Activated CD4-positive, alpha-beta T cell treated with anti-CD3 and anti-CD28 coated beads, Interleukin-2, amount 10 ng/mL, durations not matched to agents 24 days and 14 days (primary cell): ENCODE measurements at regions of chr1 and their contacts with region 1.

Region 1: DNA sequence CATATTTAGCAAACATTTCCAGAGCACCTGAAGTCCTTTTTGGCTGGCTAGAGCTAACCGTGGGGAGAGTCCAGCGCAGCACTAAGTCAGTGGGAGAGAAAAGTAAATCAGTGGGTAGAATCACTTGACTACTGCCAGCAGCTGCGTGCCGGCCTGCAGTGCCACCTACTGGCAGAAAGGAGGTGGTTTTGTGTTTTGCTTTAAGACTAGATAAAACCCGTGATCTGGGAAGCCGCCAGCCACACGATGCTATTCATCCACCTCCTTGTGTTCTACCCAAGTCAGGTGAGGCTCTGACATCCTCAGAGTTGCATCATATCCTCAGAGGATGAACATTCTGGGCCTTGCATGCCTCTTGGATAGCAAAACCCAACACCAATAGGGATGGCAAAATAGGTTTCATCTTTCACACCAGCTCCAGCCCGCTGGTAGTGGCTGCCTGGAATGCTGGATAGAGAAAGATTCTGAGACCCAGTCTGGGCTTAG is 14.1 kb upstream of the HEYL start:
- DNase-seq: peak; percentile 91
- H3K4me3 Mint-ChIP-seq: no peak overlapping the region
- H3K27ac Mint-ChIP-seq: no peak overlapping the region
- H3K4me1 Mint-ChIP-seq: peaks cover 15% of the 10 kb centered on the region
- H3K27me3 Mint-ChIP-seq: peaks cover 6% of the 10 kb centered on the region

Region 2: GRCh38 chr1:39639305-39640130 is 14.1 kb before region 1 on chr1 and contains the start of gene HEYL:
- intact Hi-C with region 1: loop called (anchors 2 kb)
- DNase-seq: peak; percentile 93
- H3K4me3 Mint-ChIP-seq: peak within 1 kb of the TSS; percentile 69
- H3K27ac Mint-ChIP-seq: no peak within 1 kb of the TSS
- H3K4me1 Mint-ChIP-seq: no peaks in the 10 kb centered on the region
- H3K27me3 Mint-ChIP-seq: peaks cover 36% of the 10 kb centered on the region
- total RNA-seq, gene HEYL: not detected in 2 replicates